Endothelial cell of umbilical vein (primary cell): ENCODE measurements at regions of chr5 and their contacts with region 1.

Region 1: GRCh38 chr5:154754460-154755360 is 467 bp upstream of the LARP1 start:
- DNase-seq: peak; percentile 99
- H3K4me3 ChIP-seq: peak overlapping the region; percentile 0 to 86 (median 7)
- H3K27ac ChIP-seq: peak overlapping the region; percentile 62
- H3K4me1 ChIP-seq: peaks cover 27% of the 10 kb centered on the region
- H3K27me3 ChIP-seq: no peaks in the 10 kb centered on the region
- CTCF ChIP-seq: peak; percentile 31 to 68
- POLR2A ChIP-seq: peak; percentile 80

Region 2: DNA sequence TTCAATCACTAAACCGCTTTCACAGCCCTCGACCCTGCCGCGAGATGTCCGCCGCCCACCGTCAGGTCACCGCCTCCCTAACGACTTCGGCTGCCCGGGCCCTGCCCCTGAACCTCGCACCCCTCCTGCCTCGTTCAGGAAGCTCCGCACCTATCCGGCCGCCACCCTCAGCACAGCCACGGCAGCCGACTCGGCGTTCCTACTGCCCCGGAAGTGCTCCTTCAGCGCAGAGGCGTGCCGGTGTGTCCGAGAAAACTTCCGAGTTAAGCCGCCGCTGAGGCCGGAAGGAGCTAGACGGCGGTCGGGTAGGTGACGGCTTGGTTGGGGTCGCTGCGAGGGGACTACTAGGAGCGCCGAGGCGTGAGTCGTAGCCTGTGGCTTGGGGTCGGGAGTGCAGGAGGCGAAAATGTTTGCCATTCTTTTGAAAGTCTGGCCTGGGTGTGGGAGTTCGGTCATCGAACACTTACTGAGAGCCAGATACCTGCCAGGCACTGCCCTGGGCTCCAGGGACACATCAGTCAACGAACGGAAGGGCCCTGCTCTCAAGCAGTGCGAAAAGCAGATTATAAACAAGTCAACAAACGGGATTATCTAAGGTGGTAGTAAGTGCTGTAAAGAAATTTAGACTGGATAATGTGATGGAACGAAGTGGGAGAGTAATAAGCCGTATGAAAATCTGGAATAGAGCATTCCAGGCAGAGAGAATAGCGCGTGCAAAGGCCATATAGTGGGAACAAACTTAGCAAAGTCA is 715.8 kb before region 1 on chr5 and contains the starts of genes FAM114A2 and MFAP3:
- CTCF ChIA-PET with region 1: no interaction called
- POLR2A ChIA-PET with region 1: no interaction called
- dilution Hi-C with region 1: no loop called
- intact Hi-C with region 1: loop called (anchors 10 kb)
- DNase-seq: peak; percentile 88
- H3K4me3 ChIP-seq: peak within 1 kb of the TSS; percentile 55 to 87 (median 79)
- H3K27ac ChIP-seq: peak within 1 kb of the TSS; percentile 52
- H3K4me1 ChIP-seq: peaks cover 28% of the 10 kb centered on the region
- H3K27me3 ChIP-seq: no peaks in the 10 kb centered on the region
- CTCF ChIP-seq: no peak
- POLR2A ChIP-seq: peak; percentile 71
- total RNA-seq, gene FAM114A2: 26.6 and 31.3 TPM in 2 replicates
- total RNA-seq, gene MFAP3: 31.7 and 35.3 TPM in 2 replicates

Region 3: DNA sequence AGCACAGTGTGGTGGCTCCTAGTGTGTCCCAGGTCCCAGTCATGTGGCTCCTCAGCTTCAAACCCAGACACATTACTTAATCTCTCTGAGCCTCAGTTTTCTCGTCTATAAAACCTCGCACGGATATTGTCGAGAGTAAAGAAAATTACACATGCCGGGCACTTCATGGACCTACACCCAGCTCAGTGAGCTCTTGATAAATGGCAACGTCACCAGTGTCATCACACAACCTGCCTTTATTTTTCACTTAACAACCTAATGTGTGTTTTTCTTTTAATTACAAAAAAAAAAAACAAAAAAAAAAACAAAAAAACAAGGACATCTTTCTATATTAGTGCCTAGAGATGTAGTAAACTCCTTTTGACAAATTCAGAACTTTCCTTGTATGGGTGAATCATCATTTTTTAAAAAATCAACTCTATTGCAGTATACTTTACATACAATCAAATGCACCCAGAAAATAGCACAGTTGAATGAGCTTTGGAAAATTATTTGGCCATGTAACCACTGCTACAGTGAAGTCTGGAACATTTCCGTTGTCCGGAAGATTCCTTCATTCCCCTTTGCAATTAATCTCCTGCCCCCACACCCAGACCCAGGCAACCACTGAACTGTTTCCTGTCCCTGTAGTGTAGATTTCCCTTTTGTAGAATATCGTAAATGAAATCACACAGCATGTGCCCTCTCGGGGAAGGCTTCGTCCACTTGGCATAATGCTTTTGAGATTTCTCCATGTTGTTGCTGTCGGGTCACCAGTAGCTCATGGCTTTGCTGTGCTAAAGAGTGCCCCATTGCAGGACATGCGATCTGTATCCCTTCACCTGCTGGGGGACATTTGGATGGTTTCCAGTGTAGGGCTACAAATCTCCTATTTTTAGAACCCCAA is 100.0 kb before region 1 on chr5:
- CTCF ChIA-PET with region 1: interaction called, 7 read pairs
- POLR2A ChIA-PET with region 1: interaction called, 5 read pairs
- dilution Hi-C with region 1: no loop called
- intact Hi-C with region 1: loop called (anchors 1 kb)
- DNase-seq: peak; percentile 79
- H3K4me3 ChIP-seq: peak overlapping the region in 1 of 3 experiments; percentile 50
- H3K27ac ChIP-seq: peak overlapping the region; percentile 86
- H3K4me1 ChIP-seq: peaks cover 22% of the 10 kb centered on the region
- H3K27me3 ChIP-seq: no peaks in the 10 kb centered on the region
- CTCF ChIP-seq: no peak
- POLR2A ChIP-seq: peak; percentile 57

Region 4: DNA sequence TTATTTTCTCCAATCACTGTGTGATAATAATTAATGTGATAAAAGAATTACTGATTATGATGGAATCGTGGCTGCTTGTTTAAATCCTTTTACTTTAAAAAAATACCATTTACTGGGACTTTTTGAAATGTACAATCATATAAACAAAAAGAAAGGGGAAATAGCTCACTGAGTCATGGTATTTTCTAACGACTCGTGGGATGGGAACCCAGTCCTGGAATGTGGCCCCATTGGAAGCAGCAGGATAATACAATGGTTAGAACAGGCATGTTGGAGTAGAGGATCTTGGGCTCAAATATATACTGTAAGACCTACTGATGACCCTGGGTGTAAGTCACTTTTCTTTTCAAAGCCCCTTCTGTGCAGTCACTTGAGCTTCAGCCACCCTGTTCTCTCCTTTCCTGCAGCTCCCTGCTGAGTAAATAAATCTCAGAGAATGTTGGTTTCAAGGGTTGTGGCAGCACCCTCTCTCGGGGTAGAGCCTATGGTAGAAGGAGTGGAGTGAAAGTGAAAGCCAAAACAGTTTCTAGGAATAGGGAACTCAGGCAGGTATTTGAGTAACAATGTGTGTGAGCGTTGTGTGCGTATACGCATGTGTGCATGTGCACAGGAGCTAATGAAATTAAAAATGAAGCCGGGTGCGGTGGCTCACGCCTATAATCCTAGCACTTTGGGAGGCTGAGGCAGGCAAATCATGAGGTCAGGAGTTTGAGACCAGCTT is 40.3 kb before region 1 on chr5:
- CTCF ChIA-PET with region 1: no interaction called
- POLR2A ChIA-PET with region 1: no interaction called
- dilution Hi-C with region 1: no loop called
- intact Hi-C with region 1: no loop called
- DNase-seq: peak; percentile 64
- H3K4me3 ChIP-seq: no peak overlapping the region
- H3K27ac ChIP-seq: peak overlapping the region; percentile 25
- H3K4me1 ChIP-seq: peaks cover 11% of the 10 kb centered on the region
- H3K27me3 ChIP-seq: no peaks in the 10 kb centered on the region
- CTCF ChIP-seq: no peak
- POLR2A ChIP-seq: no peak

Region 5: DNA sequence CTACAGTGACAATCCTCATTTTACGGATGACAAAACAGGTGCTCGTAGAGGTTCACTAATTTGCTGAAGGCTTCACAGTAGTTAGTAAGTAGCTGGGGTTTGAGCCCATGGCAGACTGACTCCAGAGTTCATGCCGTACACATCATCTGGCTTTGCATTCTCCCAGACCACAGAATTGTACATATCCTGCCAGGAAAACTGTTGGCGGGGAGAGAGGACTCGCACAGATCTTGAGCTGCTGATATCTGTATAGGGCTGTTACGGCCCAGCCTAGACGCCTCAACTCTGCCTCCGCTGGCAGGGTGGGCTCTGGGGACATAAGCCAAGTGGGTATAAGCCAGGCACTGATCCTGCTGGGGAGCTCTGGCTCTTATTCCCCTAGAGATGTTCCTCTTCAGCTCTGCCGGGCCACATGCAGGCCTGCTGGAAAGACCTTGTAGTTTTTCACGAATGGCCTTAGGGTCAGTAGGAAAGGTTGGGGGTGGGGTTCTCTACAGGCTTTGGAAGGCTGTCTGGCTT is 16.7 kb after region 1 on chr5:
- CTCF ChIA-PET with region 1: interaction called, 7 read pairs
- POLR2A ChIA-PET with region 1: no interaction called
- dilution Hi-C with region 1: no loop called
- intact Hi-C with region 1: loop called (anchors 2 kb)
- DNase-seq: peak; percentile 78
- H3K4me3 ChIP-seq: no peak overlapping the region
- H3K27ac ChIP-seq: peak overlapping the region; percentile 15
- H3K4me1 ChIP-seq: peaks cover 11% of the 10 kb centered on the region
- H3K27me3 ChIP-seq: no peaks in the 10 kb centered on the region
- CTCF ChIP-seq: no peak
- POLR2A ChIP-seq: no peak

Region 6: GRCh38 chr5:154811653-154812365 is 57.1 kb after region 1 on chr5:
- CTCF ChIA-PET with region 1: no interaction called
- POLR2A ChIA-PET with region 1: no interaction called
- dilution Hi-C with region 1: no loop called
- intact Hi-C with region 1: loop called (anchors 1 kb)
- DNase-seq: peak; percentile 77
- H3K4me3 ChIP-seq: no peak overlapping the region
- H3K27ac ChIP-seq: no peak overlapping the region
- H3K4me1 ChIP-seq: no peaks in the 10 kb centered on the region
- H3K27me3 ChIP-seq: no peaks in the 10 kb centered on the region
- CTCF ChIP-seq: peak; percentile 70 to 86
- POLR2A ChIP-seq: no peak